Panc1 (cell line): ENCODE measurements at regions of chr11 and their contacts with region 1.

Region 1: DNA sequence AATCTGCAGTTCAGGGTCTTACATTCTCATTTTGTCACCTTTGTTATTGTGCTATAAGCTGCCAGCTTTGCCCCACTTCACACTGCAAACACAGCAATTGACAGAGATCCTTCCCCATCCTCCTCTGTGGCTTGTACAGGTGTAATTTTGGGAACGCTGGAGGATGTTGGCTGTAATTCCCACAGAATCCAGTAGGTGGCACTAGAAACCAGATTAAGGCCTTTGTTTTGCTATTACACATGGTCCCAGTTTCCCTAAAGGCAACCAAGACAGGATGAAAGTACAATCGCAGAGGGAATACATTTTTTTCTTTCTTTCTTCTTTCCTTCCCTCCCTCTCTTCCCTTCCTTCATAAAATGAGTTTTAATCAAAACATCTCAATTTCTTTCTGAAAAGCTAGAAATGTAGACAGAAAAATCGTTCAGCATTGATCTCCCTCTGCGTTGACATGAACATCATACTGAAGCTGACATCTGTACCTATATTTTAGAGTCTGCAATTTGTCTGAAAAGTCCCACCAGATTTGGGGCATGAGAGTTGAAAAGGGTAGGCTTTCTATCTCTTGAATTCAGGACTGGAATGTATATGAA is 21.3 kb upstream of the NELL1 start:
- DNase-seq: peak; percentile 51
- ATAC-seq: peak; percentile 82
- H3K4me3 ChIP-seq: no peak overlapping the region
- H3K27ac ChIP-seq: no peak overlapping the region
- H3K4me1 ChIP-seq: no peaks in the 10 kb centered on the region; the same call in 1 of the 2 replicates
- H3K27me3 ChIP-seq: peaks cover 4% of the 10 kb centered on the region
- CTCF ChIP-seq: peak; percentile 88

Region 2: GRCh38 chr11:19808076-19808911 is 839.8 kb before region 1 on chr11:
- CTCF ChIA-PET with region 1: interaction called, 11 read pairs
- POLR2A ChIA-PET with region 1: no interaction called
- in situ Hi-C with region 1: no loop called
- intact Hi-C with region 1: no loop called
- DNase-seq: no peak
- ATAC-seq: no peak
- H3K4me3 ChIP-seq: no peak overlapping the region
- H3K27ac ChIP-seq: no peak overlapping the region
- H3K4me1 ChIP-seq: no peaks in the 10 kb centered on the region
- H3K27me3 ChIP-seq: no peaks in the 10 kb centered on the region
- CTCF ChIP-seq: peak; percentile 44; the same call in 1 of the 2 replicates

Region 3: DNA sequence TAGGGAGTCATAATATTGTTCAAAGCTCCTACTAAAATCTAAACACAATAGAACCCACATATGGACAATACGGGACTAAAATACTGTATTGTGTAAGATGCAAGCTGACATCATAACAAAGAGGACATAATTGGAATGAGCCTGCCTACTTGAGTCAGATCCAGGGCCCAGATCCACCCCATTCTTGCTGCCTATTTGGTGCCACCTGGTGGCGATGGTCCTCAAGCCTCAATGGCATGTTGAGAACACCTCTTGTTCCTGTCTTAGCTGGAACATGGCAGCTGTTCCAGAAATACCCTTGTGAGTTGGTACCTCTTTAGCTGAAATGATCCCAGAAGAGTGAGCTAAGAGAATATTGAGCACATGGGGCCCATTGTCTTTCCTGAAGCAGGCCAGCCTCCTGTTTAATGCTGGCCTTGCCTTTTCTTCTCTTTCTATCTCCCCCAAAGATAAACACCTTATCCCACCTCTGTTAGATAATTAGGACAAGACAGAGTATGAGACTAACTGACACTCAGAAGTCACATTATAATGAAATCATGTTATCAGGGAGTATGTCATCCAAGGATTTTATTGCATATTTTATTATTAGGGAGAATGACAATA is 863.9 kb after region 1 on chr11:
- CTCF ChIA-PET with region 1: no interaction called
- POLR2A ChIA-PET with region 1: no interaction called
- in situ Hi-C with region 1: no loop called
- intact Hi-C with region 1: loop called (anchors 2 kb)
- DNase-seq: peak; percentile 54
- ATAC-seq: peak; percentile 74
- H3K4me3 ChIP-seq: no peak overlapping the region
- H3K27ac ChIP-seq: no peak overlapping the region
- H3K4me1 ChIP-seq: no peaks in the 10 kb centered on the region
- H3K27me3 ChIP-seq: no peaks in the 10 kb centered on the region
- CTCF ChIP-seq: peak; percentile 68

Region 4: DNA sequence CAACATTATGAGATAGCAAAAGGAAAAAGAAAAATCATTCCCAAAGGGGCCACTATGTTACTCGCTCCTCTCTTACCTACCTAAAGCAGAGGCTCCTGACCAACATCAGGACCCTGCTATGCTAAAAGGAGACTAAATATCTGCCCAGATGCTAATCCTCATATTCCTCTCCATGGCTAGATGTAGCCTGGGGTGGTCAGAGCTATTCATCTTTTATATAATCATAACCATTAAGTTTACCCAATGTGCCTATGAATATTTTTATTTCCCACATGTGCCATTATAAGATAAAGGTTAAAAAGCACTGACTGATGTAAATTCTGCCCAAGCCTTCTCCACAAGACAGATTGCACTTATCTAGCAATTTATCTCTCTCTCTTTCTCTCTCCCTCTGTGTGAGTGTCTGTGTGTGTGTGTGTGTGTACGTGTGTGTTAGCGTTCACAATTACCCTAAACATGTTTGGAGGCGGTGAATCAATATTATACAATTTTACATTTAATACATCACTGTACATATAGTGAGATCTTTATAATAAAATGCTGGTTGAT is 1503.7 kb after region 1 on chr11:
- CTCF ChIA-PET with region 1: no interaction called
- POLR2A ChIA-PET with region 1: no interaction called
- in situ Hi-C with region 1: no loop called
- intact Hi-C with region 1: loop called (anchors 5 kb)
- DNase-seq: no peak
- ATAC-seq: no peak
- H3K4me3 ChIP-seq: no peak overlapping the region
- H3K27ac ChIP-seq: no peak overlapping the region
- H3K4me1 ChIP-seq: no peaks in the 10 kb centered on the region
- H3K27me3 ChIP-seq: no peaks in the 10 kb centered on the region
- CTCF ChIP-seq: no peak